ENCODE measurements at regions of chr1 and their contacts with region 1.

Region 1: GRCh38 chr1:35726450-35727433 is 8.1 kb upstream of the C1orf216 start:
- DNase-seq: peak; percentile 52
- ATAC-seq: peak; percentile 89

Region 2: GRCh38 chr1:35379317-35380000 is 347.3 kb before region 1 on chr1:
- intact Hi-C with region 1: no loop called
- DNase-seq: no peak
- ATAC-seq: no peak

Region 3: DNA sequence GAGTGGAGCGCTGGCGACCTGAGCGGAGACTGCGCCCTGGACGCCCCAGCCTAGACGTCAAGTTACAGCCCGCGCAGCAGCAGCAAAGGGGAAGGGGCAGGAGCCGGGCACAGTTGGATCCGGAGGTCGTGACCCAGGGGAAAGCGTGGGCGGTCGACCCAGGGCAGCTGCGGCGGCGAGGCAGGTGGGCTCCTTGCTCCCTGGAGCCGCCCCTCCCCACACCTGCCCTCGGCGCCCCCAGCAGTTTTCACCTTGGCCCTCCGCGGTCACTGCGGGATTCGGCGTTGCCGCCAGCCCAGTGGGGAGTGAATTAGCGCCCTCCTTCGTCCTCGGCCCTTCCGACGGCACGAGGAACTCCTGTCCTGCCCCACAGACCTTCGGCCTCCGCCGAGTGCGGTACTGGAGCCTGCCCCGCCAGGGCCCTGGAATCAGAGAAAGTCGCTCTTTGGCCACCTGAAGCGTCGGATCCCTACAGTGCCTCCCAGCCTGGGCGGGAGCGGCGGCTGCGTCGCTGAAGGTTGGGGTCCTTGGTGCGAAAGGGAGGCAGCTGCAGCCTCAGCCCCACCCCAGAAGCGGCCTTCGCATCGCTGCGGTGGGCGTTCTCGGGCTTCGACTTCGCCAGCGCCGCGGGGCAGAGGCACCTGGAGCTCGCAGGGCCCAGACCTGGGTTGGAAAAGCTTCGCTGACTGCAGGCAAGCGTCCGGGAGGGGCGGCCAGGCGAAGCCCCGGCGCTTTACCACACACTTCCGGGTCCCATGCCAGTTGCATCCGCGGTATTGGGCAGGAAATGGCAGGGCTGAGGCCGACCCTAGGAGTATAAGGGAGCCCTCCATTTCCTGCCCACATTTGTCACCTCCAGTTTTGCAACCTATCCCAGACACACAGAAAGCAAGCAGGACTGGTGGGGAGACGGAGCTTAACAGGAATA is 149.4 kb before region 1 on chr1:
- intact Hi-C with region 1: loop called (anchors 10 kb)
- DNase-seq: peak; percentile 60
- ATAC-seq: peak; percentile 68

Region 4: GRCh38 chr1:35637401-35637809 is 89.3 kb before region 1 on chr1:
- intact Hi-C with region 1: loop called (anchors 10 kb)
- DNase-seq: no peak
- ATAC-seq: no peak

Region 5: DNA sequence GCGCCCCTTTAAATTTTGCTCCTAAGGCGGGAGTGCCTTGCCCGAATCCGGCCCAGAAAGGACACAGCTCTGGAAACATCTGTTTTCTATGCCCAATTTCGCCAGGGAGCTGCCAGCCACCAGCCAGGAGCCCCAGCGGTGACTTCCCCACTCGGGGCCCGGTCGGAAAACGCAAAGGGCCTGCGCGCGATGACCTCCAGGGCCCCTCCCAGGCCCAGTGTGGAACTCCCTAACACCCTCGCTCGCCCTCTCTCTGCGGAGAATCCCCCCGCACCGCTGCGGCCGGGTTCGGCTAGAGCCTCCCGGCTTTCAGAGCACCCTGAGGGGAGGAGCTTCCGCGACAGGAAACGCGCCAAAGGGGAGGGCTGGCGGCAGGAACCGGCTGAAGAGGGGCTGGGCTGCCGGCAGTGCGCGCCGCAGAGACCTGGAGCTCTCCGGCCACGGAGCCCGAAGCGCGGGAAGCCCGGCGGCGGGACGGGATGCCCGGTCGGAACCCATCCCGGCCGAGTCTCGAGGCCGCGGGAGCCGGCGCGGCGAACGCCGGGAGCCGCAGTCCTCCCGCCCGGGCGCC is 42.5 kb after region 1 on chr1:
- intact Hi-C with region 1: no loop called
- DNase-seq: peak; percentile 89
- ATAC-seq: peak; percentile 93